Dorsolateral prefrontal cortex (tissue), 120 donors: ENCODE measurements at regions of chr5 and their contacts with region 1.

Region 1: GRCh38 chr5:161544350-161544765 is 2.2 kb downstream of the GABRB2 start:
- DNase-seq: peak; percentile 36 to 74 (median 67)
- H3K4me3 ChIP-seq: peak overlapping the region in 57 of 59 donors; percentile 10 to 79 (median 66)
- H3K27ac ChIP-seq: peak overlapping the region in 12 of 59 donors; percentile 5 to 89 (median 23)
- H3K27me3 ChIP-seq: peaks cover 0 to 33% (median 0%) of the 10 kb centered on the region in 45 donors
- CTCF ChIP-seq: peak; percentile 63 to 92 (median 85)

Region 2: GRCh38 chr5:160439205-160439600 is 1105.2 kb before region 1 on chr5:
- intact Hi-C with region 1: loop called in 1 of 2 experiments (anchors 10 kb)
- DNase-seq: peak; percentile 80 to 96 (median 90)
- H3K4me3 ChIP-seq: peak overlapping the region; percentile 42 to 77 (median 63)
- H3K27ac ChIP-seq: peak overlapping the region in 40 of 59 donors; percentile 0 to 84 (median 50)
- H3K27me3 ChIP-seq: no peaks in the 10 kb centered on the region
- CTCF ChIP-seq: peak; percentile 76 to 98 (median 92)

Region 3: DNA sequence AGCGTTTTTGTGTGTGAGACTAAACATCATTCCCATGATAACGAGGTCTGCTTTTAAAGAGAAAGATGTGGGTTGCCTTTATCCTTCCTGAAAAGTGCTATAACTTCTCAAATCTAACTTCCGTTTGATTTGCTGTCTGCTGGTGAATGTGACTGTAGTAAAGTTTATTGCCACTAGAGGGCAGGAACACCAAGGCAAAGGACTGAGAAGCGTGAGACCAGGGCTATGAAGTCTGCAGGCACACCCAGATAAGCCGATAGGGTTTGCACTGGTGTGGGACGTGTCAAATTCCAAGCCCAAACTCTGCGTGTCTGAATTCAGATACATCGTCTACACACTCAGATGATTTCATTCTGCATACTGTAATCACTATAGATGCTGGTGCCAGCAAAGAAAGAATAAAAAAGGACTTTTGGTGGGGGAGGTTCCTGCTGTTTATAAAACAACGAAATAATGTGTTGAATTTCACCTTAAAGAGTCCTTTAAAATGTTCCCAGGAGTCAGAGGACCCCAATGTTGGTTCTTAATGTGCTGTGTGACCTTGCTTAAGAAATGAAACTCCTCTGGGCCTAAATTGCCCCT is 1035.5 kb before region 1 on chr5:
- intact Hi-C with region 1: loop called in 1 of 2 experiments (anchors 10 kb)
- DNase-seq: peak in 7 of 10 donors; percentile 43 to 76 (median 56)
- H3K4me3 ChIP-seq: peak overlapping the region in 1 of 59 donors; percentile 15
- H3K27ac ChIP-seq: peak overlapping the region in 46 of 59 donors; percentile 8 to 84 (median 53)
- H3K27me3 ChIP-seq: no peaks in the 10 kb centered on the region
- CTCF ChIP-seq: peak; percentile 74 to 95 (median 89)

Region 4: GRCh38 chr5:161302559-161302958 is 241.8 kb before region 1 on chr5:
- intact Hi-C with region 1: loop called in 1 of 2 experiments (anchors 10 kb)
- DNase-seq: no peak
- H3K4me3 ChIP-seq: no peak overlapping the region
- H3K27ac ChIP-seq: peak overlapping the region in 4 of 59 donors; percentile 1 to 73 (median 34)
- H3K27me3 ChIP-seq: no peaks in the 10 kb centered on the region
- CTCF ChIP-seq: no peak

Region 5: GRCh38 chr5:161471211-161471950 is 73.0 kb before region 1 on chr5:
- intact Hi-C with region 1: no loop called
- DNase-seq: no peak
- H3K4me3 ChIP-seq: no peak overlapping the region
- H3K27ac ChIP-seq: no peak overlapping the region
- H3K27me3 ChIP-seq: no peaks in the 10 kb centered on the region
- CTCF ChIP-seq: no peak

Region 6: GRCh38 chr5:161498531-161498930 is 45.8 kb before region 1 on chr5:
- intact Hi-C with region 1: no loop called
- DNase-seq: no peak
- H3K4me3 ChIP-seq: no peak overlapping the region
- H3K27ac ChIP-seq: no peak overlapping the region
- H3K27me3 ChIP-seq: no peaks in the 10 kb centered on the region
- CTCF ChIP-seq: no peak

Region 7: GRCh38 chr5:161846746-161847145 is 302.4 kb after region 1 on chr5:
- intact Hi-C with region 1: loop called in 1 of 2 experiments (anchors 5 kb)
- DNase-seq: peak in 1 of 10 donors; percentile 52
- H3K4me3 ChIP-seq: peak overlapping the region in 57 of 59 donors; percentile 33 to 73 (median 53)
- H3K27ac ChIP-seq: peak overlapping the region in 50 of 59 donors; percentile 11 to 90 (median 74)
- H3K27me3 ChIP-seq: peaks cover 0 to 35% (median 5%) of the 10 kb centered on the region in 45 donors
- CTCF ChIP-seq: no peak

Region 8: GRCh38 chr5:163347671-163348070 is 1803.3 kb after region 1 on chr5:
- intact Hi-C with region 1: loop called in 1 of 2 experiments (anchors 10 kb)
- DNase-seq: peak in 9 of 10 donors; percentile 48 to 86 (median 67)
- H3K4me3 ChIP-seq: peak overlapping the region in 1 of 59 donors; percentile 13
- H3K27ac ChIP-seq: peak overlapping the region in 23 of 59 donors; percentile 4 to 64 (median 41)
- H3K27me3 ChIP-seq: no peaks in the 10 kb centered on the region
- CTCF ChIP-seq: peak; percentile 68 to 93 (median 84)

Region 9: DNA sequence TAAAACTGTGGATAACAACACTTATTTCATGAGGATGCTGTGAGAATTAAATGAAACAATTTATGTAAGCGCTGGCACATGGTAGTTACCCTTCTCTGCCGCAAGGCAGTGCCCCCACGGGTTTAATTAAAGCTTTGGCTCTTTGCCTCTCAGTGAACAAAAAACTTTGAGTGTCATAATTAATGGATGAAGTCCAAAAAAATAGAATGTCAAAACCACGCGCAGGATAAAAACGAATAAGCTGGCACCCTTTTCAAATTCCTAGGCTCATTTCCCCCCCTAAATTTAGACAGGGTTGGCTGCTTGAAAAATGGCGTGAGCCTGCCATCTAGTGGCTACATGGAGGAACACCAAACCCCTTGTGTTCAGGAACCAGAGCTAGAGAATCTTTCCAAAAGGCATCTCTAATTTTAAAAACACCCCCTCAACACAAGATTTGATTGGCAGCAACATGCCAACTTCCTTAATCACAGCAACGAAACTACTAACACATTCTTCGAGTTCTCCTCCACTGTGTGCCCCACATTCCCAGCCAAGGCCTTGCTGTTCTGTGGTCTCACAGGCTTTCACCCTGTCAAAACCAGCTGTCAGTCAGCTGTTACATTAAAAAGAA is 1864.1 kb after region 1 on chr5:
- intact Hi-C with region 1: loop called (anchors 2 to 5 kb)
- DNase-seq: peak in 9 of 10 donors; percentile 32 to 76 (median 69)
- H3K4me3 ChIP-seq: peak overlapping the region in 53 of 59 donors; percentile 1 to 62 (median 37)
- H3K27ac ChIP-seq: peak overlapping the region in 49 of 59 donors; percentile 1 to 83 (median 54)
- H3K27me3 ChIP-seq: no peaks in the 10 kb centered on the region
- CTCF ChIP-seq: peak; percentile 82 to 99 (median 94)